ENCODE measurements at regions of chr9 and their contacts with region 1.

Region 1: GRCh38 chr9:75866273-75866871 is 24.1 kb upstream of the PCSK5 start:
- DNase-seq: peak; percentile 51
- ATAC-seq: peak; percentile 38; the same call in 1 of the 2 replicates
- H3K4me3 Mint-ChIP-seq: no peak overlapping the region
- H3K27ac Mint-ChIP-seq: peak overlapping the region; percentile 33; the same call in 1 of the 2 replicates
- H3K4me1 Mint-ChIP-seq: peaks cover 12% of the 10 kb centered on the region
- H3K27me3 Mint-ChIP-seq: no peaks in the 10 kb centered on the region
- CTCF ChIP-seq: peak; percentile 43; the same call in 1 of the 2 replicates

Region 2: GRCh38 chr9:75333624-75334023 is 532.7 kb before region 1 on chr9:
- CTCF ChIA-PET with region 1: interaction called, 11 read pairs
- POLR2A ChIA-PET with region 1: no interaction called
- DNase-seq: no peak
- ATAC-seq: no peak
- H3K4me3 Mint-ChIP-seq: no peak overlapping the region
- H3K27ac Mint-ChIP-seq: no peak overlapping the region
- H3K4me1 Mint-ChIP-seq: no peaks in the 10 kb centered on the region
- H3K27me3 Mint-ChIP-seq: no peaks in the 10 kb centered on the region
- CTCF ChIP-seq: no peak

Region 3: GRCh38 chr9:75847085-75847484 is 19.3 kb before region 1 on chr9:
- CTCF ChIA-PET with region 1: interaction called, 14 read pairs
- POLR2A ChIA-PET with region 1: no interaction called
- DNase-seq: no peak
- ATAC-seq: no peak
- H3K4me3 Mint-ChIP-seq: no peak overlapping the region
- H3K27ac Mint-ChIP-seq: no peak overlapping the region
- H3K4me1 Mint-ChIP-seq: no peaks in the 10 kb centered on the region
- H3K27me3 Mint-ChIP-seq: no peaks in the 10 kb centered on the region
- CTCF ChIP-seq: no peak

Region 4: DNA sequence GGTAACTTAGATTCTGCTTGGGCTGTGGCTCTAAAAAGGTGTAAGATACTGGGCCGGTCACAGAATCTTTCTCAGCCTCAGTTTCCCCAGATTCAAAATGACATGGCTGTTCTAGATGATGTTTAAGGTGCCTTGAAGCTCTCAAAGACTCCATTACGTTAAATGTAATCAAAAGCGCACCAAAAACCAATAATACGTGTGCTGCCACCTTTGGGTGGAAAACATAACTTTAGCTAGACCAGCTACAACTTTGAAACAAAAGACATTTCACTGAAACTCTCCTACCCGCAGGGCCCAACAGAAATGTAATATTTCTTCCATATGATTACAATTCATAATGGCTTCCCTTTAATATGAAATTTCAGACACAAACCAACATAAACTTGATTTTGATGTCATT is 10.9 kb before region 1 on chr9:
- CTCF ChIA-PET with region 1: interaction called, 26 read pairs
- POLR2A ChIA-PET with region 1: no interaction called
- DNase-seq: no peak
- ATAC-seq: peak; percentile 57
- H3K4me3 Mint-ChIP-seq: no peak overlapping the region
- H3K27ac Mint-ChIP-seq: no peak overlapping the region
- H3K4me1 Mint-ChIP-seq: peaks cover 9% of the 10 kb centered on the region
- H3K27me3 Mint-ChIP-seq: no peaks in the 10 kb centered on the region
- CTCF ChIP-seq: no peak

Region 5: DNA sequence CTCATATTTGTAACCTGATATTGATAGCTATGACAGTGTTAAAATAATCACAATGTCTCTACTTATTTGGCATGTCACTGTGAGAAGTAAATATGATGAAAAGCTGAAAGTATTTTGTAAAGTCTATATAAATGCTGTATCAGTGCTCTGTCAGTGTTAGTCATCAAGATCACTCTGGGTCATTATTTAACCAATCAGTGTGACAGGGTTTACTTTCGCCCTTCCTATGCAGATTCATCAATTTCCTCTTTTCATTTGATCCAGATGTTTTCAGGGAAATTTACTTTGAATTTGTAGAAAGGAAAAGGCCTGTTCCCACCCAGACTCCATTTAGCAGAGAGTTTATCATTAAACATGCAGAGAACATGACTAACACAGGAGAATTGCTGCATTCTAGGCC is 14.2 kb after region 1 on chr9:
- CTCF ChIA-PET with region 1: interaction called, 30 read pairs
- POLR2A ChIA-PET with region 1: no interaction called
- DNase-seq: no peak
- ATAC-seq: no peak
- H3K4me3 Mint-ChIP-seq: no peak overlapping the region
- H3K27ac Mint-ChIP-seq: no peak overlapping the region
- H3K4me1 Mint-ChIP-seq: peaks cover 20% of the 10 kb centered on the region
- H3K27me3 Mint-ChIP-seq: no peaks in the 10 kb centered on the region
- CTCF ChIP-seq: no peak

Region 6: DNA sequence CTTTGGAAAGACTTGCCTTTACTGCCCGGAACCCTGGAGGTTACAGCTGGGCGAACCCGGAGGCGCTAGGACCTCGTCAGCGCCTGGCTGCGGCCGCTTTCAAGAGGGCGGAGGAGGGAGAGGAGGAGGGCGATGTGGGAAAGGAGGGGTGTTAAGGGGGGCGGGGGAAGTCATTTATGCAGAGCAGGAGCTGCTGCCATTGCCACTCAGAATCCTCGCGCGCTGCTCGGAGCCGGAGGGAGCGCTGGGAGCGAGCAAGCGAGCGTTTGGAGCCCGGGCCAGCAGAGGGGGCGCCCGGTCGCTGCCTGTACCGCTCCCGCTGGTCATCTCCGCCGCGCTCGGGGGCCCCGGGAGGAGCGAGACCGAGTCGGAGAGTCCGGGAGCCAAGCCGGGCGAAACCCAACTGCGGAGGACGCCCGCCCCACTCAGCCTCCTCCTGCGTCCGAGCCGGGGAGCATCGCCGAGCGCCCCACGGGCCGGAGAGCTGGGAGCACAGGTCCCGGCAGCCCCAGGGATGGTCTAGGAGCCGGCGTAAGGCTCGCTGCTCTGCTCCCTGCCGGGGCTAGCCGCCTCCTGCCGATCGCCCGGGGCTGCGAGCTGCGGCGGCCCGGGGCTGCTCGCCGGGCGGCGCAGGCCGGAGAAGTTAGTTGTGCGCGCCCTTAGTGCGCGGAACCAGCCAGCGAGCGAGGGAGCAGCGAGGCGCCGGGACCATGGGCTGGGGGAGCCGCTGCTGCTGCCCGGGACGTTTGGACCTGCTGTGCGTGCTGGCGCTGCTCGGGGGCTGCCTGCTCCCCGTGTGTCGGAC is 24.3 kb after region 1 on chr9 and contains the start of gene PCSK5:
- CTCF ChIA-PET with region 1: interaction called, 11 read pairs
- POLR2A ChIA-PET with region 1: interaction called, 3 read pairs
- DNase-seq: peak; percentile 92
- ATAC-seq: peak; percentile 81
- H3K4me3 Mint-ChIP-seq: peak within 1 kb of the TSS; percentile 93
- H3K27ac Mint-ChIP-seq: no peak within 1 kb of the TSS
- H3K4me1 Mint-ChIP-seq: peaks cover 42% of the 10 kb centered on the region
- H3K27me3 Mint-ChIP-seq: peaks cover 21% of the 10 kb centered on the region
- CTCF ChIP-seq: no peak
- total RNA-seq, gene PCSK5: 16.9 to 30.6 TPM (median 17.8 TPM) in 3 replicates

Measured in WTC11 (cell line).